Pancreas (tissue), 10 donors: ENCODE measurements at regions of chr21 and their contacts with region 1.

Region 1: GRCh38 chr21:31900121-31900895 is 27.5 kb downstream of the HUNK start:
- DNase-seq: peak; percentile 70 to 88 (median 84)
- ATAC-seq: peak; percentile 86 to 93 (median 90)
- H3K4me3 ChIP-seq: peak overlapping the region in 2 of 4 donors; percentile 8 to 19
- H3K27ac ChIP-seq: peak overlapping the region; percentile 89 to 96 (median 96)
- H3K4me1 ChIP-seq: peaks cover 45 to 61% (median 54%) of the 10 kb centered on the region in 3 donors
- H3K27me3 ChIP-seq: no peaks in the 10 kb centered on the region
- CTCF ChIP-seq: no peak

Region 2: DNA sequence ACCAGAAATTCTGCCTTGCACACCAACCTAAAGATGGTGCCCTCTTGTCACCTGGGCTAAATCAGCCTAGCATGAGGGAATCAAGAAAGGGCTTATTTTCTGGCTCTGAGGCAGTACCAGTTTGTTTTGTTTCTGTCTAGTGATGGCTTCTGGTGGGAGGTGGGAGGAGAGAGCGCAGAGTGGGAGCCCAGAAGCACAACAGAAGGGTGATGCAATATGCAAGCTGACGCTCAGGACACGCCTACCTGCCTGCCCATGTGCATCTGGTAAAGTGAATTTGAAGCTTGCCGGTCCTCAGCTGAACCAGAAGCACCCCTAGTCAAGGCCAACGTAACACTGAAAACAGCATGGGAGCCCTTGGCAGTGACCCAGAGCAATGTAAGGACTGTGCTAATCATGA is 417.8 kb before region 1 on chr21:
- intact Hi-C with region 1: no loop called
- DNase-seq: no peak
- ATAC-seq: no peak
- H3K4me3 ChIP-seq: no peak overlapping the region
- H3K27ac ChIP-seq: no peak overlapping the region
- H3K4me1 ChIP-seq: no peaks in the 10 kb centered on the region
- H3K27me3 ChIP-seq: no peaks in the 10 kb centered on the region
- CTCF ChIP-seq: no peak

Region 3: GRCh38 chr21:31873696-31874599 is 26.4 kb before region 1 on chr21:
- intact Hi-C with region 1: loop called in 1 of 3 experiments (anchors 2 kb)
- DNase-seq: peak; percentile 71 to 95 (median 80)
- ATAC-seq: peak; percentile 66 to 79 (median 66)
- H3K4me3 ChIP-seq: peak overlapping the region; percentile 58 to 94 (median 66)
- H3K27ac ChIP-seq: peak overlapping the region; percentile 67 to 94 (median 88)
- H3K4me1 ChIP-seq: peaks cover 20 to 25% (median 20%) of the 10 kb centered on the region in 3 donors
- H3K27me3 ChIP-seq: no peaks in the 10 kb centered on the region
- CTCF ChIP-seq: peak; percentile 60 to 73 (median 66)